GM12878 (cell line): ENCODE measurements at regions of chr18 and their contacts with region 1.

Region 1: DNA sequence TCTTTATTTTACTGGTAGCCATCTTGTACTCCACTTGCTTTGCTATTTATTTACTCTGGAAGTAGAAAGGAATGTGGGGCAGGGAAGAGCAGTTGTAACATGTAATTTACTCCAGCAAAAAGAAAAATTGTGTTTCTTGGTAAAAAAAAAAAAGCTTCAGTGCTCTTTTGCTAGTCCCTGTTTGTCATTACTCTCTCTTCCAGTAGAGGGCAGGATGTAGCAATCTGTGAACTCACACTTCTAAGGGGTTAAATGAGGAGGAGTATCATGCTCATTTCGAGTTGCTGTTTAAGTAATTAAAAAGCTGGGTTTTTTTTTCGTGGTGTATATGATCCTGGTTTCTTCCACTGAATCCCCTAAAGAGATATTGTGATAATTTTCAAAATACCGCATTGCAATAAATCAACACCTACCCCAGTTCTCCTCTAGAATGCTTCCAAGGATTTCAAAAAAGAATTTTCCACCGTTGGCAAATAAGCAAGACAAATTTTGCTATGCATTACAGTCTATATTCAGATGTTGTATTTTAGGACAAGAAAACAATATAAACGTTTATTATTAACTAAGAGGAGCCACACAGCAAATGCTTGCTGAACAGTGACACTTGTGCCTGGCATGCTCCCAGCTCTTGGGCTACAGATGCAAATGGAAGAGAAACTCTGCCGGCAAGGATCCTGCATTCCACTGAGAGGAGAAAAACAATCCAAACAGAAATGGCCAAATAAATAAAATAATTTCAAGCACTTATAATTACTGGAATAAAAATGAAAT is 261.6 kb downstream of the ASXL3 start:
- DNase-seq: no peak
- ATAC-seq: peak; percentile 72
- H3K4me3 ChIP-seq: no peak overlapping the region
- H3K27ac ChIP-seq: no peak overlapping the region
- H3K4me1 ChIP-seq: no peaks in the 10 kb centered on the region
- H3K27me3 ChIP-seq: no peaks in the 10 kb centered on the region
- CTCF ChIP-seq: peak; percentile 68 to 78 (median 75)
- EP300 ChIP-seq: no peak
- POLR2A ChIP-seq: no peak
- RAD21 ChIP-seq: peak; percentile 80

Region 2: DNA sequence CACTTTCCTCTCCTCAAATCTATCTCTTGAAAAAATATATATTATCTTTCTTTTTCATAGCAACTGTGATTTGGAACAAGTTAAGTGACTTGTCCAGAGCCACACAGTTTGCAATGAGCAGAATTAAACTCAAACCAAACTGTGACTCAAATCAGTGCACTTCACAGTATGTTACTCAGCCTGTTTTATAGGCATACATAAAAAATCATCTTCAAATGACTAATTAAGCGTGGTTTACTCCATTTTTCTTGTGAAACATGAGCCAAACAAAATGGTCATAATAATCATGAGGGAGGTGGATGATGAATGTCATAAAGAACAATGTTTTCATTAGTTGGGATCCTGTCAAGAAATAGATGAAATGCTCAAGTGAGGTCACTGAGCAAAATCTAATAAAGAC is 393.0 kb before region 1 on chr18:
- CTCF ChIA-PET with region 1: no interaction called
- POLR2A ChIA-PET with region 1: no interaction called
- RAD21 ChIA-PET with region 1: no interaction called
- SMC1A ChIA-PET with region 1: no interaction called
- in situ Hi-C with region 1: no loop called
- intact Hi-C with region 1: no loop called
- DNase-seq: no peak
- ATAC-seq: no peak
- H3K4me3 ChIP-seq: no peak overlapping the region
- H3K27ac ChIP-seq: no peak overlapping the region
- H3K4me1 ChIP-seq: no peaks in the 10 kb centered on the region
- H3K27me3 ChIP-seq: no peaks in the 10 kb centered on the region
- CTCF ChIP-seq: no peak
- EP300 ChIP-seq: no peak
- POLR2A ChIP-seq: no peak
- RAD21 ChIP-seq: no peak

Region 3: DNA sequence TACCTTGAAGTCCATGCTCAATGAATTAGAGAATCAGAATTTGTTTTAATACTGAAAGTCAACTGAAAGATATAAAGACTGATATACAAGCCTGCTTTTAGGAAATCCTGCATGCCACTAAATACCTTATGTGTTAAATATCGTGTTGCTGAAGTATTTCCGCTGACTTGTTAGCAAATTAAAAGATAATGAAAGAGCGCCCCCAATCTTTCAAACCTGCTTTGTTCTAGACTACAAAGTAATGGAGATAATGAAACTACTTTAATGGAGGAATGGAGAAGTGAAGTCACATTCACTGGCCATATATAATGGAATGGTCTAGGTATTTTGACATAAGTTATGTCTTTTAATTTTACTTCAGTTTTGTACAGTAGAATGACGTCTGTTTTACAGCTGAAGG is 165.9 kb before region 1 on chr18:
- CTCF ChIA-PET with region 1: no interaction called
- POLR2A ChIA-PET with region 1: no interaction called
- RAD21 ChIA-PET with region 1: no interaction called
- SMC1A ChIA-PET with region 1: no interaction called
- in situ Hi-C with region 1: no loop called
- intact Hi-C with region 1: no loop called
- DNase-seq: no peak
- ATAC-seq: no peak; the same call in 2 of the 3 replicates
- H3K4me3 ChIP-seq: no peak overlapping the region
- H3K27ac ChIP-seq: no peak overlapping the region
- H3K4me1 ChIP-seq: no peaks in the 10 kb centered on the region
- H3K27me3 ChIP-seq: no peaks in the 10 kb centered on the region; a peak in 2 of 4 replicates
- CTCF ChIP-seq: no peak
- EP300 ChIP-seq: no peak
- POLR2A ChIP-seq: no peak
- RAD21 ChIP-seq: 0 out of 2 replicates have a peak, but pooled peaks have one; percentile 8

Region 4: DNA sequence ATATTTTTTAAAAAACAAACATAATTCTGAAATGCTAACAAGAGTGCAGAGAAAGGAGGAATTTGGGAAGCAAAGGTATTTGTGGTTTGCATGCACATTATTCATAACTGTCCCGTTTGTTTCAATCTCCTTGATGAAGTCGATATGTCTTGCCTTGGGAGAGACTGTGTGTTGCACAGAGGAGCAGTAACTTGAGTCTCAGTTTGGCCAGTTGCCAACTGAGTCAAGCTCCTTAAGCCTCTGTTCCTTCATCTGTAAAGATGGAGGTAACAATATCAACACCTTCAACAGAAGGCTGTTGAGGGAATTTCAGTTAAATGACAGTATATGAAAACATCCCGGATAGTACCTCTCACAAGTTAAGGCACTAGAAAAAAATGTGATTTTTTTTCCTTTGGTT is 35.4 kb before region 1 on chr18:
- CTCF ChIA-PET with region 1: no interaction called
- POLR2A ChIA-PET with region 1: no interaction called
- RAD21 ChIA-PET with region 1: no interaction called
- SMC1A ChIA-PET with region 1: no interaction called
- in situ Hi-C with region 1: no loop called
- intact Hi-C with region 1: no loop called
- DNase-seq: no peak
- ATAC-seq: no peak
- H3K4me3 ChIP-seq: no peak overlapping the region
- H3K27ac ChIP-seq: no peak overlapping the region
- H3K4me1 ChIP-seq: no peaks in the 10 kb centered on the region
- H3K27me3 ChIP-seq: no peaks in the 10 kb centered on the region
- CTCF ChIP-seq: no peak
- EP300 ChIP-seq: no peak
- POLR2A ChIP-seq: no peak
- RAD21 ChIP-seq: no peak

Region 5: GRCh38 chr18:33851546-33852078 is 12.0 kb after region 1 on chr18:
- CTCF ChIA-PET with region 1: interaction called, 19 read pairs
- POLR2A ChIA-PET with region 1: interaction called, 4 read pairs
- RAD21 ChIA-PET with region 1: interaction called, 4 read pairs
- SMC1A ChIA-PET with region 1: interaction called, 9 read pairs
- in situ Hi-C with region 1: no loop called
- intact Hi-C with region 1: no loop called
- DNase-seq: no peak
- ATAC-seq: peak; percentile 41
- H3K4me3 ChIP-seq: no peak overlapping the region
- H3K27ac ChIP-seq: no peak overlapping the region
- H3K4me1 ChIP-seq: no peaks in the 10 kb centered on the region
- H3K27me3 ChIP-seq: no peaks in the 10 kb centered on the region
- CTCF ChIP-seq: no peak
- EP300 ChIP-seq: no peak
- POLR2A ChIP-seq: no peak
- RAD21 ChIP-seq: no peak

Region 6: GRCh38 chr18:33937270-33937816 is 97.7 kb after region 1 on chr18:
- CTCF ChIA-PET with region 1: interaction called, 4 read pairs
- POLR2A ChIA-PET with region 1: no interaction called
- RAD21 ChIA-PET with region 1: interaction called, 6 read pairs
- SMC1A ChIA-PET with region 1: interaction called, 14 read pairs
- in situ Hi-C with region 1: no loop called
- intact Hi-C with region 1: no loop called
- DNase-seq: peak; percentile 3
- ATAC-seq: peak; percentile 84
- H3K4me3 ChIP-seq: no peak overlapping the region
- H3K27ac ChIP-seq: no peak overlapping the region
- H3K4me1 ChIP-seq: no peaks in the 10 kb centered on the region
- H3K27me3 ChIP-seq: no peaks in the 10 kb centered on the region
- CTCF ChIP-seq: no peak
- EP300 ChIP-seq: no peak; a peak in 1 of 4 replicates
- POLR2A ChIP-seq: no peak
- RAD21 ChIP-seq: no peak

Region 7: DNA sequence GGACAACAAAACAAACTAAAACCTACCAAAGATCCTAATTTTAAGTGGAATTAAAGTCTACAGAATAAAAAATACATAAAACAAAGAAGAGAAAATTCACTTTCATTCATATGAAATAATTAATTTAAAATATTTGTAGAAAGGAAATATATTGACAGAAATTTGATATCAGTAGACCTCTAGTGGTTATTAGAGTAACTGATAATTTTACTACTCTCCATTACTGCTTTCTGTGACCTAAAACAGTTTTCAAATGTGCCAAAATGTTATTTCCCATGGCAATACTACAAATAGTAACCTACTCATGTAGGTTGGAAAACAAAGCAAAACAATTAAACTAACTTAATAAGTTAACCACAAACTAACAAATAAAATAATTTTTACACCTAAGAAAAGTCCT is 238.0 kb after region 1 on chr18:
- CTCF ChIA-PET with region 1: interaction called, 19 read pairs
- POLR2A ChIA-PET with region 1: no interaction called
- RAD21 ChIA-PET with region 1: interaction called, 4 read pairs
- SMC1A ChIA-PET with region 1: interaction called, 3 read pairs
- in situ Hi-C with region 1: no loop called
- intact Hi-C with region 1: loop called (anchors 1 kb)
- DNase-seq: no peak
- ATAC-seq: no peak
- H3K4me3 ChIP-seq: no peak overlapping the region
- H3K27ac ChIP-seq: no peak overlapping the region
- H3K4me1 ChIP-seq: no peaks in the 10 kb centered on the region
- H3K27me3 ChIP-seq: no peaks in the 10 kb centered on the region
- CTCF ChIP-seq: peak in 1 of 3 experiments; percentile 6; a peak in 1 of 6 replicates
- EP300 ChIP-seq: no peak
- POLR2A ChIP-seq: no peak
- RAD21 ChIP-seq: no peak

Region 8: DNA sequence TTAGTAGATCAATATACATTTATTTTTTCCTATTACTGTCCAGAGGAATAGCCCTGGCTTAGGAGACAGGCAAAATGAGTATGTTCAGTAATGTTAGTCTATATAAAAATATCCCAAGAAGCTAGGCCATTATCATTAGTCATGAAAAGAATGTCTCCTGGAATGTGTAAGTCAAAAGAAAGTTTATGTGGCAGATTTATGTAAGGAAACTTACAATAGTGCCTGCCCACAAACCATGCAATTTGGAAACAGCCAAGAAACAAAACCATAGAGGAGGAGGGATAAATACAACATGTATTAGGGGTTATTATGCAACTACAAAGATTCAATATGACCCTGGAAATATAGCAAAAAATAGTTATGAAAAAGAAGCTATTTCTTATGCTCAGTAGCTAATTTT is 288.8 kb after region 1 on chr18:
- CTCF ChIA-PET with region 1: interaction called, 79 read pairs
- POLR2A ChIA-PET with region 1: no interaction called
- RAD21 ChIA-PET with region 1: interaction called, 74 read pairs
- SMC1A ChIA-PET with region 1: interaction called, 83 read pairs
- in situ Hi-C with region 1: no loop called
- intact Hi-C with region 1: loop called (anchors 2 kb)
- DNase-seq: no peak
- ATAC-seq: no peak
- H3K4me3 ChIP-seq: no peak overlapping the region
- H3K27ac ChIP-seq: no peak overlapping the region
- H3K4me1 ChIP-seq: no peaks in the 10 kb centered on the region
- H3K27me3 ChIP-seq: no peaks in the 10 kb centered on the region
- CTCF ChIP-seq: no peak
- EP300 ChIP-seq: no peak
- POLR2A ChIP-seq: no peak
- RAD21 ChIP-seq: no peak

Region 9: GRCh38 chr18:34787931-34788532 is 948.4 kb after region 1 on chr18:
- CTCF ChIA-PET with region 1: interaction called, 12 read pairs
- POLR2A ChIA-PET with region 1: no interaction called
- RAD21 ChIA-PET with region 1: interaction called, 6 read pairs
- SMC1A ChIA-PET with region 1: interaction called, 7 read pairs
- in situ Hi-C with region 1: loop called (anchors 25 kb)
- intact Hi-C with region 1: loop called (anchors 5 kb)
- DNase-seq: peak; percentile 11
- ATAC-seq: peak; percentile 79
- H3K4me3 ChIP-seq: no peak overlapping the region
- H3K27ac ChIP-seq: no peak overlapping the region
- H3K4me1 ChIP-seq: no peaks in the 10 kb centered on the region
- H3K27me3 ChIP-seq: no peaks in the 10 kb centered on the region; a peak in 1 of 4 replicates
- CTCF ChIP-seq: peak; percentile 43 to 70 (median 58); a peak in 5 of 6 replicates
- EP300 ChIP-seq: no peak
- POLR2A ChIP-seq: no peak
- RAD21 ChIP-seq: peak; percentile 81